ENCODE measurements at regions of chr7 and their contacts with region 1.

Region 1: GRCh38 chr7:25259587-25260243 is 31.4 kb upstream of the NPVF start:
- DNase-seq: peak; percentile 82
- ATAC-seq: peak; percentile 88
- H3K4me3 Mint-ChIP-seq: no peak overlapping the region
- H3K27ac Mint-ChIP-seq: no peak overlapping the region
- H3K4me1 Mint-ChIP-seq: peaks cover 25% of the 10 kb centered on the region
- H3K27me3 Mint-ChIP-seq: peaks cover 2% of the 10 kb centered on the region
- CTCF ChIP-seq: peak; percentile 83

Region 2: GRCh38 chr7:25272265-25272664 is 12.6 kb after region 1 on chr7:
- CTCF ChIA-PET with region 1: interaction called, 15 read pairs
- POLR2A ChIA-PET with region 1: no interaction called
- intact Hi-C with region 1: no loop called
- DNase-seq: no peak
- ATAC-seq: no peak
- H3K4me3 Mint-ChIP-seq: no peak overlapping the region
- H3K27ac Mint-ChIP-seq: no peak overlapping the region
- H3K4me1 Mint-ChIP-seq: no peaks in the 10 kb centered on the region
- H3K27me3 Mint-ChIP-seq: peaks cover 1% of the 10 kb centered on the region
- CTCF ChIP-seq: no peak

Region 3: GRCh38 chr7:25288556-25289307 is 29.0 kb after region 1 on chr7:
- CTCF ChIA-PET with region 1: interaction called, 12 read pairs
- POLR2A ChIA-PET with region 1: no interaction called
- intact Hi-C with region 1: no loop called
- DNase-seq: no peak
- ATAC-seq: no peak
- H3K4me3 Mint-ChIP-seq: no peak overlapping the region
- H3K27ac Mint-ChIP-seq: no peak overlapping the region
- H3K4me1 Mint-ChIP-seq: no peaks in the 10 kb centered on the region
- H3K27me3 Mint-ChIP-seq: no peaks in the 10 kb centered on the region
- CTCF ChIP-seq: no peak

Region 4: DNA sequence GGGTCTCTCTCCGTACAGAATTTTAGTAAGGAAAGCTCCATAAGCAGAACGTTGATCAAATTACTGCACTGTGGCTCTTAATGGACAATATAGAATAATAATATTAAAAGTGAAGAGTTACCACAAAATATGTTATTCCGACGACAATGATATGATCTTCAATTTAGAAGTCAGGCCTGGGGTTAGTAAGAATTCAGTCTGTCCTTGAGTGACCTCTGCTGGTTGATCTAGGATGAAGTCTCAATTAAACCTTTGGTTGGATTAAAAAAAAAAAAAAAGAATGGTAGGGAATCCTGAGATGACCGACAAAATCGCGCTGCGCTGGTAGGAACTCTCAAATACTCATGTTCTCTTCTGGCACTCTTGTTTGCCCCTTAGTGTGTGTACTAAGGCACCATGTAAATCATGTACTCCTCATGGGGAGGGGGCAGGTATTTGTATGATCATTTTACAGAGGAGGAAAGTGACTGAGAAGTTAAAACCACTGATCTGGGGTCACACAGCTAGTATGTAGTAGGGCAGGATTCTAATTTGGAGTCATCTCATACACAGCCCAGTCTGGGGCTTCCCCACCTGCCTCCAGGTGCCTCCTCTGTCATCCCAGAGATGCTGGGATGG is 129.9 kb after region 1 on chr7:
- CTCF ChIA-PET with region 1: interaction called, 65 read pairs
- POLR2A ChIA-PET with region 1: no interaction called
- intact Hi-C with region 1: loop called (anchors 2 kb)
- DNase-seq: peak; percentile 11
- ATAC-seq: no peak
- H3K4me3 Mint-ChIP-seq: no peak overlapping the region
- H3K27ac Mint-ChIP-seq: no peak overlapping the region
- H3K4me1 Mint-ChIP-seq: no peaks in the 10 kb centered on the region
- H3K27me3 Mint-ChIP-seq: peaks cover 2% of the 10 kb centered on the region
- CTCF ChIP-seq: peak; percentile 42

Region 5: DNA sequence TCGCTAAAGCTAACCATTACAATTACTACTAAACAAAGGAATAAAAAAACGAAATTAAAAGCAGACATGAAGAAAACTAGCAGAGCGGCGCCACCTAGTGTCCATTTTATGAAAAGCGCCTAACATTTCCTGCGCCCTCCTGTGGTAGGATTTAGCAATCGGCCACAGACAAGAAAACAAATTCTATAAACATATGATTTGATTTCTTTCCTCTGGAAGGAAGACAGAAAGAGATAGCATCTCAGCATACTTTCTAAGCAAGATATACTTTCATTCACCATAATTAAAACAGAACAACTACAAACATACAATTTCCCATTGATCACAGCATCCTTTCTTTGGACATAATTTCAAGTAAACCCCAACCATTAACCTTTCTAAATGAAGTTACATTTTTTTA is 306.2 kb after region 1 on chr7:
- CTCF ChIA-PET with region 1: interaction called, 183 read pairs
- POLR2A ChIA-PET with region 1: interaction called, 3 read pairs
- intact Hi-C with region 1: loop called (anchors 1 kb)
- DNase-seq: peak; percentile 75
- ATAC-seq: peak; percentile 27
- H3K4me3 Mint-ChIP-seq: no peak overlapping the region
- H3K27ac Mint-ChIP-seq: no peak overlapping the region
- H3K4me1 Mint-ChIP-seq: peaks cover 1% of the 10 kb centered on the region
- H3K27me3 Mint-ChIP-seq: no peaks in the 10 kb centered on the region
- CTCF ChIP-seq: peak; percentile 100

Region 6: DNA sequence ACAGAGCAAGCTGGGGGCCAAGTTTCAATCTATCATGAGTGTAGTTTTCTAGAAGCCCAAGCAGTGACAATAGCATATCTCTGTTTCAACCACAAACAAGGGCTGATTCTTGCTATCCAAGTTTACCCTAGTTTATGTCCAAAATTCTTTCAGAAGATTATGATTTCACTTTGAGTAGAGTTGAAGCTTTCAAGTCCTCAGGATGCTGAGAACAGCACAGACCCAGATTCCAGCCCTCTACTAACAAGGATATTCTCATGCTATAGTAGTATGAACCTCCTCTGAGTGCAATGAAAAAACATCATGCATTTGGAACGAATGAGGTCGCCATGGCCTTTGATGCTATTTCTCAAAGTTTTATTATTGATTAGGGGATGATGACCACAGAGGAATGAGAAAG is 312.7 kb after region 1 on chr7:
- CTCF ChIA-PET with region 1: interaction called, 183 read pairs
- POLR2A ChIA-PET with region 1: no interaction called
- intact Hi-C with region 1: no loop called
- DNase-seq: no peak
- ATAC-seq: no peak
- H3K4me3 Mint-ChIP-seq: no peak overlapping the region
- H3K27ac Mint-ChIP-seq: no peak overlapping the region
- H3K4me1 Mint-ChIP-seq: no peaks in the 10 kb centered on the region
- H3K27me3 Mint-ChIP-seq: no peaks in the 10 kb centered on the region
- CTCF ChIP-seq: no peak

Region 7: GRCh38 chr7:25851332-25852210 is 591.9 kb after region 1 on chr7:
- CTCF ChIA-PET with region 1: interaction called, 11 read pairs
- POLR2A ChIA-PET with region 1: no interaction called
- intact Hi-C with region 1: loop called (anchors 5 kb)
- DNase-seq: peak; percentile 76
- ATAC-seq: peak; percentile 50
- H3K4me3 Mint-ChIP-seq: peak overlapping the region; percentile 56
- H3K27ac Mint-ChIP-seq: peak overlapping the region; percentile 31
- H3K4me1 Mint-ChIP-seq: peaks cover 15% of the 10 kb centered on the region
- H3K27me3 Mint-ChIP-seq: peaks cover 56% of the 10 kb centered on the region
- CTCF ChIP-seq: peak; percentile 84

Measured in activated CD8-positive, alpha-beta T cell treated with anti-CD3 and anti-CD28 coated beads for 36 hours (primary cell).